ENCODE measurements at regions of chr1 and their contacts with region 1.

Region 1: GRCh38 chr1:151639466-151639865 is 27.6 kb downstream of the SNX27 start:
- DNase-seq: no peak
- ATAC-seq: no peak

Region 2: DNA sequence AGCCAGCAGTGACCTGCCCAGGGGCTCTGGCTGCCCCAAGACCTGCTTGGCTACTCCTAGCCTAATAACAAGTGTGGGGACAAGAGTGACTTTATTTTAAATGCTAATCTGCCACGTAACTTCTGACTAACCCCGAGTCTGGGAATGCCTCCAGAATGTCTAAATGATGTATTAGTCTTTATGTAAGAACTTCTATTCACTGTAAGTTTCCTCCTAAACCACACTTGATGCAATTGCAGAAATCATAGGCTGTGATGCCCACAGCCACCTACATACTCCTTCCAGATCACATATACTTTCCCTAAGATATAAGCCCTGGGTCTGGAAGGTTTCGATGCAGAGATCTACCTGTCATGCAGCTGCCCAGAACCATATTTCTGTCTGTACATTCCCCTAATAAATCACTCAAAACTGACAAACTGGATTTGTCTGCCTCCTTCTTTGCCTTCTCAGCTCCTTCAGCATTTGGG is 1577.8 kb before region 1 on chr1:
- intact Hi-C with region 1: loop called (anchors 5 kb)
- DNase-seq: no peak
- ATAC-seq: peak; percentile 13

Region 3: DNA sequence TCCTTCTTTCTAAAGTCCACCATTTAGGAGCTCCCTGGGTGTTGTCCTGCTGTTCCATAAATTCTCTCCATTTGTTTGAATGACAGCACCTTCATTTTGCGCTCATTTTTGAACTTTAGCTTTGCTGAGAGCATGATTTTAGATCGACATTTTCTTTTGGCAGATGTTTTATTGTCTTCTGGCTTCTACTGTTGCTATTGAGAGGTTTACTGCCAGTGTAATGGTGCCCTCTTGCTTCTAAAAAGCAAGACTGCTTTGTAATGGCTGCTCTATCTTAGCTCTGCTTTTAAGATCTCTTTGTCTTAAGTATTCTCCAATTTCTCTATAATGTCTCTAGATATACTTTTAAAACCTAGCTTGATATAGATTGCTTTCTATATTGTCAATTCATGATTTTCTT is 242.0 kb after region 1 on chr1:
- intact Hi-C with region 1: no loop called
- DNase-seq: no peak
- ATAC-seq: no peak